Right ventricle myocardium inferior (tissue), 1 donor: ENCODE measurements at regions of chr5 and their contacts with region 1.

Region 1: DNA sequence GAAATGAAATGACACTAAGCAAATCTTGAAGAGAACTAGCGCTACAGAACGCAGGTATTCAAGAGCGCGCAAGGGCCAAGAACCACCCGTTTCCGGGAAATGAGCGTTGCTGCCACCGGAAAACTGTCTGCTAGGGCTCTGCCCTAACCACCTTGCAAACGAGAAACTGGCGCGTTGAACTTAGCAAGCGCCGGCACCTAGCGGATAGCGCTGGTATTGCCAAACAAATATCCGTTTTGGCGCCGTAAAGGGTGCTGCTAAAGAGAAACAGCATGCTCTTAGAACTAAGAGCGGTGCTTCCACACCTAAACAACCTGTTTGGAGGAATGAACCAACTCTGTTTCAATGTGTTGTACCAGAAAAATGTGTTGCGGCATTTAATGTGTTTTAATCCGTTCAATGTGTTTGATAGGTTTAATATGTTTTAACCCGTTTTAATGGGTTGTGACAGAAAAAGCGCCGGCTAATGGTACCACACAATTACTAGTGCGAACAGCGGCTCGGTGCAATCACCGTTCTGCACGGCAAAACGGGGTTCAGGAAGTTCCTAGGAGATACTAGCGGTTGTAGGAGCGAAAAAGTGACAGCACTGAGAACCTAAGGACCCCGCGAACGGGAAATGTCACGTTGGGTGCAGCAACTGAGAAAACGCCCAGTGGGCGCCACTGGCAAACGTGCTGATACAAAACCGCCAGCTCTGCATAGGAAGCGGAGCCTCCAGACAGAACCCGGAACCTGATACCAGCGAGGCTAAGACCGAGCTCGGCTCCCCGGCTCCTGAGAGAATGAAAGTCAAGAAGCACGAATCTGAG is at the start of gene ANXA2R:
- DNase-seq: peak; percentile 89
- ATAC-seq: peak; percentile 66
- total RNA-seq, gene ANXA2R: 0.84 TPM

Region 2: GRCh38 chr5:42908509-42909488 is 131.7 kb before region 1 on chr5:
- intact Hi-C with region 1: loop called (anchors 2 kb)
- DNase-seq: peak; percentile 96
- ATAC-seq: peak; percentile 93

Region 3: GRCh38 chr5:42950440-42951292 is 89.8 kb before region 1 on chr5:
- intact Hi-C with region 1: loop called (anchors 1 kb)
- DNase-seq: peak; percentile 73
- ATAC-seq: peak; percentile 77

Region 4: GRCh38 chr5:43008369-43009153 is 31.9 kb before region 1 on chr5:
- intact Hi-C with region 1: loop called (anchors 5 kb)
- DNase-seq: peak; percentile 91
- ATAC-seq: peak; percentile 87

Region 5: DNA sequence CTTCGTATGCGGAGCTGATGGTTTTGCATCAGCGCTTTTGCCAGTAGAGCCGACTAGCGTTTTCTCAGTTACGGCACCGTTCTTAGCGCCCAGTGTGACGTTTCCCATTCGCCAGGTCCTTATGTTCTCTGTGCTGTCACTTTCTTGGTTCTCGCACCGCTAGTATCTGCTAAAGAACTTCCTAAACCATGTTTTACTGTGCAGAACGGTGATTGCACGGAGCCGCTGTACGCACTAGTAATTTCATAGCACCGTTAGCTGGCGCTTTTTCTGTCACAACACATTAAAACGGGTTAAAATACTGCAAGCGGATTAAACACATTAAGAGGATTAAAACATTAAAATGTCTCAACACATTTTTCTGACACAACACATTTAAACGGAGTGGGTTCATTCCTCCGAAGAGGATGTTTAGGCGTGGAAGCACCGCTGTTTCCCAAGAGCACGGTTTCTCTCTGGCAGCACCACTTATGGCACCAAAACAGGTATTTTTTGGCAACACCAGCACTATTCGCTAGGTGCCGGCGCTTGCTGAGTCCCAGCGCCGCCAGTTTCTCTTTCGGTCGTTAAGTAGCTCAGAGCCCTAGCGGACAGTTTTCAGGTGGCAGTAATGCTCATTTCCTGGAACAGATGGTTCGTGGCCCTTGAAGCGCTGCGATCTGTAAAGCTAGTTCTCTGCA is 20.7 kb before region 1 on chr5:
- intact Hi-C with region 1: loop called (anchors 1 kb)
- DNase-seq: peak; percentile 80
- ATAC-seq: peak; percentile 36